ENCODE measurements at regions of chr4 and their contacts with region 1.

Region 1: DNA sequence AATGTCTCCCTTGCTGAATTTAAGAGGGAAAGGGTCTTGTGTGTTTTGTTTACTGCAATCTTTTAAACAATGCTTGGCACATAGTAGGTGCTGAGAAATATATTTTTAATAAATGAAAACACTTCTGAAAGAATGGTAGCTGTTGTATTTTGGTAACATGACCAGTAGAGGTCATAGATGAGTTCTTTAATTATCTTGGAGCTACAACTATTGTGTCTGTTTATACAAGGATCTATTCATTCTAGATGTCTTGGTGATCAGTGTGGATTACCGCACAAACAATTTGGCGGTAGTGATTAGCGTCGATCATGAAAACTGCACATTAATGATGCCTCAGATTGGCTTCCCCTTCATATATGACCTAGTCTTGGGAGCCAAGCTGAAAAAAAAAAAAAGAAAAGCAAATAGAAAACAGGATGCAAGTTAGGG is 21.4 kb upstream of the SCRG1 start:
- DNase-seq: peak; percentile 28
- ATAC-seq: peak; percentile 55
- H3K4me3 ChIP-seq: no peak overlapping the region
- H3K27ac ChIP-seq: no peak overlapping the region
- H3K4me1 ChIP-seq: peaks cover 3% of the 10 kb centered on the region
- H3K27me3 ChIP-seq: no peaks in the 10 kb centered on the region
- CTCF ChIP-seq: peak; percentile 63
- POLR2A ChIP-seq: no peak
- RAD21 ChIP-seq: peak; percentile 55

Region 2: DNA sequence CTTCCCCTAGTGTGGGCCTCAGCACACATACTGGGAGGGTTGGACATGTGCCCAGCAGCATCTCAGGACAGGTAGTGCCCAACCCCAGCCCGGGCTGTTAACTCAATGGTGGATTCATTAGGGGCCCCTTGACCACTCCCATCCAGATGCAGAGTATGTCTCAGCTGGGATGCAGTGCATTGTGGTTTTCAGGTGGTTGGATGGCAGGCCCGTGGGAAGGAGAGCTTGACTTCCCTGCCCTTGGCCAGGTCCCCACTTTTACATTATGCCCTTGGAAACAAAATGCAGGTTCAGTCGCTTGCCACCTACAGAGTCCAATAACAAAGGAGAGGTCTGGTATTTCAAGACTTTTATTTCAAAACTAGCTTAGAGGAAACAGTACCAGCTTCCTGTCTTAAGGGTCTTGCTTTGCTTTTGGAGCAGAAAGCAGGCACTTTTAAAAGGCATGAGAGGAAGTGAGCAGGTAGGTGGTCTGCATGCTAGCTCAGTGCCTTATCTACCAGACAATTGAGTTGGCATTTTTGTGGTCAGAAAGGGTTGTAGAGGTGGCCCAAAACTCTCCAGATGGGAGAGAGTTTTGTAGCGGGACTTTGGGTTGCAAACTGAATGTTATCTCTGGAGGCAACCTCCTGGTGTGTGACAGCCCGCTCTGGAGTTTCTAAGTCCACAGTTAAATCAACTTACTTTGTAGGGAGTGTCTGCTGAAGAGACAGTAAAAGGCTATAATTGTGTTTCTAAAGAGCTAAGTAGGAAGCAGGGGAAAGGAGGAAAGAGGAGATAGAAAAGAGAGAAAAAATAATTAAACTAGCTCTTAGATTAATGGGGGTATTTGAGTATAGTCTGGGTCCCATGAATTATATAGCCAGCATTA is 1436.2 kb before region 1 on chr4:
- CTCF ChIA-PET with region 1: no interaction called
- POLR2A ChIA-PET with region 1: no interaction called
- dilution Hi-C with region 1: no loop called
- in situ Hi-C with region 1: no loop called
- intact Hi-C with region 1: no loop called
- DNase-seq: no peak
- ATAC-seq: no peak
- H3K4me3 ChIP-seq: no peak overlapping the region
- H3K27ac ChIP-seq: no peak overlapping the region
- H3K4me1 ChIP-seq: no peaks in the 10 kb centered on the region
- H3K27me3 ChIP-seq: no peaks in the 10 kb centered on the region
- CTCF ChIP-seq: no peak
- POLR2A ChIP-seq: no peak
- RAD21 ChIP-seq: no peak

Region 3: DNA sequence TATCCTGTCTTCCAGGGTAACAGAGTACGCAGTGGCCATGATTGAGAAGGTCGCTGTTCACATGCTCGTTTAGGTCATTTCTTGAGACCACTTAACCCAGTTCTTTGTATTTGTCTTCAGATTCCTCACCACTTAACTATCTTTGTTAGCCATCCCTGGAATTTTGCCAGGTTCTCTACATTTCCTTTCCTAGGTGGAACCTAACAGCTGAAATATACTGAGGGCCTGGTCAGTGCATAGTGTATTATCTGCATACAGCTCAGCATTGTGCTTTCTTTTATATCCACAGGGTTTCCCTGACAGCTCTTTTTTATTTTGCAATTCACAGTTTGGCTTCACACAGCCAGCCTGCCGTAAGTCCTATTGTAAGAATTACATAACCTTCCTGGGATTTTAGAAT is 400.6 kb before region 1 on chr4:
- CTCF ChIA-PET with region 1: no interaction called
- POLR2A ChIA-PET with region 1: no interaction called
- dilution Hi-C with region 1: no loop called
- in situ Hi-C with region 1: loop called (anchors 5 kb)
- intact Hi-C with region 1: no loop called
- DNase-seq: no peak
- ATAC-seq: no peak
- H3K4me3 ChIP-seq: no peak overlapping the region
- H3K27ac ChIP-seq: no peak overlapping the region
- H3K4me1 ChIP-seq: no peaks in the 10 kb centered on the region
- H3K27me3 ChIP-seq: peaks cover 22% of the 10 kb centered on the region
- CTCF ChIP-seq: no peak
- POLR2A ChIP-seq: no peak
- RAD21 ChIP-seq: no peak

Region 4: GRCh38 chr4:173168396-173169177 is 251.8 kb before region 1 on chr4 and contains the start of gene GALNT7:
- CTCF ChIA-PET with region 1: no interaction called
- POLR2A ChIA-PET with region 1: no interaction called
- dilution Hi-C with region 1: no loop called
- in situ Hi-C with region 1: no loop called
- intact Hi-C with region 1: no loop called
- DNase-seq: peak; percentile 52
- ATAC-seq: peak; percentile 60
- H3K4me3 ChIP-seq: peak within 1 kb of the TSS; percentile 84
- H3K27ac ChIP-seq: peak within 1 kb of the TSS; percentile 78
- H3K4me1 ChIP-seq: peaks cover 2% of the 10 kb centered on the region; the same call in 1 of the 2 replicates
- H3K27me3 ChIP-seq: no peaks in the 10 kb centered on the region
- CTCF ChIP-seq: no peak
- POLR2A ChIP-seq: no peak
- RAD21 ChIP-seq: no peak
- total RNA-seq, gene GALNT7: 31.2 and 43.9 TPM in 2 replicates

Region 5: DNA sequence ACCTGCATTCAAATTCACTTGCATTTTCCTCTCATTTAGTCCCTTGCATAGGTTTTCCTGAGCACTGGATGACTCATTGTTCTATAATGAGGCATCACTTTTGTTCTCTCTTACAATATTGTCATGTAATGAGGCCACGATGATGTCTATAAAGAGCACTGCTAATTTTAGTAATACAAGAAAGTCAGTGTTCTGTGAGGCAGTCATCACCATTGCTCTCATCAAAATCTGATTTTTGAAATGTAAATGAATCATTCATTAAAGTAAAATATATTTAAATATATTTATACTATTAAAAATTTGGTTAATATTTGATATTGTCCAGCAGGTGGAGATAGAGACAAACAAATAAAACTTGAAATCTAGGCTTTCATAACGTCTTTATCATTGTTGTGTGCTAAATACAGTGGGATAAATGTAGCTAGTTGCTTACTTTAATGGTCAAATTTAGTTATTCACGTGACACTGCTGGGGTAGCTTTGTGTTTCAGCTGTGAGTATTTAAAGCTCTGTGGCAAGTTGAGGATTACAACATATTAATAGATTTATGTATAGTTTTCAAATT is 101.6 kb before region 1 on chr4:
- CTCF ChIA-PET with region 1: interaction called, 7 read pairs
- POLR2A ChIA-PET with region 1: no interaction called
- dilution Hi-C with region 1: no loop called
- in situ Hi-C with region 1: no loop called
- intact Hi-C with region 1: loop called (anchors 1 kb)
- DNase-seq: peak; percentile 74
- ATAC-seq: peak; percentile 71
- H3K4me3 ChIP-seq: no peak overlapping the region
- H3K27ac ChIP-seq: no peak overlapping the region
- H3K4me1 ChIP-seq: no peaks in the 10 kb centered on the region
- H3K27me3 ChIP-seq: no peaks in the 10 kb centered on the region
- CTCF ChIP-seq: peak; percentile 47
- POLR2A ChIP-seq: no peak
- RAD21 ChIP-seq: peak; percentile 50

Region 6: GRCh38 chr4:173494013-173494970 is 74.0 kb after region 1 on chr4:
- CTCF ChIA-PET with region 1: interaction called, 24 read pairs
- POLR2A ChIA-PET with region 1: no interaction called
- dilution Hi-C with region 1: no loop called
- in situ Hi-C with region 1: loop called (anchors 5 kb)
- intact Hi-C with region 1: loop called (anchors 1 kb)
- DNase-seq: peak; percentile 62
- ATAC-seq: peak; percentile 73
- H3K4me3 ChIP-seq: peak overlapping the region; percentile 47
- H3K27ac ChIP-seq: no peak overlapping the region
- H3K4me1 ChIP-seq: peaks cover 16% of the 10 kb centered on the region
- H3K27me3 ChIP-seq: peaks cover 32% of the 10 kb centered on the region
- CTCF ChIP-seq: peak; percentile 70
- POLR2A ChIP-seq: no peak
- RAD21 ChIP-seq: peak; percentile 69

Region 7: DNA sequence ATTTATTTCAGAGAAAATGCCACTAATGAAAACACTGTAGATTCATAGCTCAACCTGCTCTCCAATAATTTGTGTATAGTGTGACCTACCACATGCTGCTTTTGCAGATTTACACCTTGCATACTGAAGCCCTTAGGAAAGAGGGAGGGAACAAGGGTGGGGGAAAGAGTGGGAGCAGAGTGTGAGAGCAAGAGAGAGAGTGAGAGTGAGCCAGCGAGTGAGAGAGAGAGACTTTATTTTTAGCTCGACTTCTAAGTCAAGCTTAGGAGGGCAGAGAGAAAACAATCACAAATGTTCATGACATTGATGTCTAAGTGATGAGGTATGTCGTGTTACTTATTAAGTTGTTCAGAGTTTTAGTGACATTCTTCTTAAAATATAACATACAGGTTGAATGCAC is 222.2 kb after region 1 on chr4:
- CTCF ChIA-PET with region 1: no interaction called
- POLR2A ChIA-PET with region 1: no interaction called
- dilution Hi-C with region 1: no loop called
- in situ Hi-C with region 1: no loop called
- intact Hi-C with region 1: no loop called
- DNase-seq: no peak
- ATAC-seq: no peak
- H3K4me3 ChIP-seq: no peak overlapping the region
- H3K27ac ChIP-seq: no peak overlapping the region
- H3K4me1 ChIP-seq: no peaks in the 10 kb centered on the region
- H3K27me3 ChIP-seq: no peaks in the 10 kb centered on the region
- CTCF ChIP-seq: no peak
- POLR2A ChIP-seq: no peak
- RAD21 ChIP-seq: no peak

Region 8: GRCh38 chr4:173990126-173990868 is 570.0 kb after region 1 on chr4:
- CTCF ChIA-PET with region 1: interaction called, 4 read pairs
- POLR2A ChIA-PET with region 1: no interaction called
- dilution Hi-C with region 1: no loop called
- in situ Hi-C with region 1: no loop called
- intact Hi-C with region 1: loop called (anchors 2 kb)
- DNase-seq: peak; percentile 46
- ATAC-seq: peak; percentile 83
- H3K4me3 ChIP-seq: no peak overlapping the region
- H3K27ac ChIP-seq: no peak overlapping the region
- H3K4me1 ChIP-seq: no peaks in the 10 kb centered on the region
- H3K27me3 ChIP-seq: peaks cover 2% of the 10 kb centered on the region
- CTCF ChIP-seq: peak; percentile 56
- POLR2A ChIP-seq: no peak
- RAD21 ChIP-seq: peak; percentile 69

Region 9: GRCh38 chr4:174156239-174156826 is 736.0 kb after region 1 on chr4:
- CTCF ChIA-PET with region 1: no interaction called
- POLR2A ChIA-PET with region 1: no interaction called
- dilution Hi-C with region 1: no loop called
- in situ Hi-C with region 1: no loop called
- intact Hi-C with region 1: loop called (anchors 1 kb)
- DNase-seq: peak; percentile 38
- ATAC-seq: peak; percentile 67
- H3K4me3 ChIP-seq: no peak overlapping the region
- H3K27ac ChIP-seq: no peak overlapping the region
- H3K4me1 ChIP-seq: no peaks in the 10 kb centered on the region
- H3K27me3 ChIP-seq: peaks cover 6% of the 10 kb centered on the region
- CTCF ChIP-seq: peak; percentile 54
- POLR2A ChIP-seq: no peak
- RAD21 ChIP-seq: peak; percentile 52